Activated CD4-positive, alpha-beta memory T cell treated with anti-CD3 and anti-CD28 coated beads, Interleukin-2, amount 10 ng/mL, durations not matched to agents 7 days and 5 days (primary cell): ENCODE measurements at regions of chr14 and their contacts with region 1.

Region 1: DNA sequence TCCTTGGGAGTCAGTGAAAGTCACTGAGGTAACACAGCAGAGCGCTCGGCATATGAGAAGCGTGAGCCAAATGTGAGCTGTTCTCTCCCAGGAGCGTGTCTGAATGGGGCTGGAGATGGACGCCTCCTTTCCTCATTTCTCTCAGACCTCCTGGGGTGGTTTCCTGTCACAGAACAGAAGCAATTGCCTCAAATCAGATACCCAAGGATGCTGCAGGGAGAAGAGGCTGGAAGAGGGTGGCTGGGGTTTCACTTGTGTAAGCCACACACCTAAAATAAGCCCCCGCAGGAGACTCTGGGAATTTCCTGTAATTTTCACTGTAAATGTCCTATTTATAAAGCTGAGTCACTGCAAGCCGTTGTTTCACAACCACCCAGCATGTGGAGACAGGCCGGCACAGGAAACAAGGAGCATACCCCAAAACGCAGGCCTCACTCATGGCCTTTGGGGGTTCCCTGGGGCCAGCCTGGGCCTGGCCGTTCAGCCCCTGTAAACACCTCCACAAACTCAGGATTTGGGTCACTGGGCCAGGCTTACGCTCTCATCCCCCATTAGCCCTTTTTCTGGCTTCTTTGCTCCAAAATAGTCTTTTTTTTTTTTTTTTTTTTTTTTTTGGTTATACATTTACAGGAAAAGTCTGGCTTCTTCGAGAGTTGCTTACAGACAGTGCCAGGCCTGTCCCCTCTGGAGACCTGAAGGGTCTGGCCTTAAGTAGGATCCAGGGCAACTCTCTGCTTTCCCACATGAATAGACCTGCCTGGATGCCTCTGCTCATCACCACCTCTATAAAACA is 55.3 kb downstream of the VCPKMT start:
- DNase-seq: peak; percentile 59
- H3K4me3 Mint-ChIP-seq: peak overlapping the region; percentile 93
- H3K27ac Mint-ChIP-seq: peak overlapping the region; percentile 100
- H3K4me1 Mint-ChIP-seq: peaks cover 85% of the 10 kb centered on the region
- H3K27me3 Mint-ChIP-seq: no peaks in the 10 kb centered on the region

Region 2: DNA sequence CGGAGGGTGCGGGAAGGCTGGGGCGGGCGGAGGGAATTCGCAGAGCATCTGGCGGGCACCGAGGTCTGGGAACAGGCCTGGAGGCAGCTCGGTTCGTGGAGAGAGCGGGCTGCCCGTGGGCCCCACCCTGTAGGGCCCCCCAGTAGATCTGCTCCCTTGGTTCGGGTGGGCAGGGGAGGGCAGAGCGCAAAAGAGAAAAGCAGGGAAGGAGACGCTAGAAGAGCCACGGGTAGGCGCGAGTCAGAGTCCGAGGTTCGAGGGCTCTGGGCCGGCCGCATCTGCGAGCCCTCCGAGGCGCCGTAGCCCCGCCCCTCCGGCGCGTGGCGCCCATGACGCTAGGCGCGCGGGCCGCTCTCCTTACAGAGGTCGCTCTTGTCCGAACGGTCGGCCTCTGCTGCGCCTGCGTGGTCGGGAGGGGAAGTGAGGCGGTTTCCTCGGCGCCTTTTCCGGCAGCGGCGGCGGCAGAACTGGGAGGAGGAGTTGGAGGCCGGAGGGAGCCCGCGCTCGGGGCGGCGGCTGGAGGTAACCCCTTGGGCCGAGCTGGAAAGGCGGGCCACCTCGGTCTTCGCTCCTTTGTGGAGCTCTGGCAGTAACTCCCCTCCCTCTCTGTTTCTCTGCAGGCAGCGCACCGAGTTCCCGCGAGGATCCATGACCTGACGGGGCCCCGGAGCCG is 168.3 kb before region 1 on chr14 and contains the start of gene ARF6:
- CTCF ChIA-PET with region 1: interaction called, 6 read pairs
- POLR2A ChIA-PET with region 1: interaction called, 65 read pairs
- DNase-seq: peak; percentile 98
- H3K4me3 Mint-ChIP-seq: peak within 1 kb of the TSS; percentile 96
- H3K27ac Mint-ChIP-seq: peak within 1 kb of the TSS; percentile 100
- H3K4me1 Mint-ChIP-seq: peaks cover 20% of the 10 kb centered on the region
- H3K27me3 Mint-ChIP-seq: no peaks in the 10 kb centered on the region
- total RNA-seq, gene ARF6: 198 to 199 TPM

Region 3: DNA sequence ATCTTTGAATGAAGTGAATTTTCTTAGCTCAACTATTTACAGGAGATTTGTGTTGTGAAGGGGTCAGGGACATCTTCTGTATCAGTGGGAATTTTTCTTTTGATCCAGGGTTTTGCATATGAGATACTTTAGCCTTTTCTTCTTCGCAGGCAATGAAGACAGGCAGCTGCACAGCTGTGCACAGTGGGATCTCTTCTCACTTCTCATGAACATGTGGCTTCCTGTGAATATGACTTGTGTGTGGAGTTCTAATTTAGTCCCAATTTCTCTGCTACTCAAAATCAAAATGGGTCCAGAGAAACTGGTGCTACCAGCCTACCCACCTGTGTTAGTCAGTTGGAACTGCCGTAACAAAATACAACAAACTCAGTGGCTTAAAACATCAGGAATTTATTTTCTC is 130.3 kb before region 1 on chr14:
- CTCF ChIA-PET with region 1: no interaction called
- POLR2A ChIA-PET with region 1: no interaction called
- DNase-seq: no peak
- H3K4me3 Mint-ChIP-seq: no peak overlapping the region
- H3K27ac Mint-ChIP-seq: no peak overlapping the region
- H3K4me1 Mint-ChIP-seq: peaks cover 11% of the 10 kb centered on the region
- H3K27me3 Mint-ChIP-seq: no peaks in the 10 kb centered on the region

Region 4: GRCh38 chr14:49940808-49941421 is 120.2 kb before region 1 on chr14:
- CTCF ChIA-PET with region 1: interaction called, 6 read pairs
- POLR2A ChIA-PET with region 1: interaction called, 17 read pairs
- DNase-seq: peak; percentile 30
- H3K4me3 Mint-ChIP-seq: no peak overlapping the region
- H3K27ac Mint-ChIP-seq: peak overlapping the region; percentile 63
- H3K4me1 Mint-ChIP-seq: peaks cover 68% of the 10 kb centered on the region
- H3K27me3 Mint-ChIP-seq: no peaks in the 10 kb centered on the region

Region 5: DNA sequence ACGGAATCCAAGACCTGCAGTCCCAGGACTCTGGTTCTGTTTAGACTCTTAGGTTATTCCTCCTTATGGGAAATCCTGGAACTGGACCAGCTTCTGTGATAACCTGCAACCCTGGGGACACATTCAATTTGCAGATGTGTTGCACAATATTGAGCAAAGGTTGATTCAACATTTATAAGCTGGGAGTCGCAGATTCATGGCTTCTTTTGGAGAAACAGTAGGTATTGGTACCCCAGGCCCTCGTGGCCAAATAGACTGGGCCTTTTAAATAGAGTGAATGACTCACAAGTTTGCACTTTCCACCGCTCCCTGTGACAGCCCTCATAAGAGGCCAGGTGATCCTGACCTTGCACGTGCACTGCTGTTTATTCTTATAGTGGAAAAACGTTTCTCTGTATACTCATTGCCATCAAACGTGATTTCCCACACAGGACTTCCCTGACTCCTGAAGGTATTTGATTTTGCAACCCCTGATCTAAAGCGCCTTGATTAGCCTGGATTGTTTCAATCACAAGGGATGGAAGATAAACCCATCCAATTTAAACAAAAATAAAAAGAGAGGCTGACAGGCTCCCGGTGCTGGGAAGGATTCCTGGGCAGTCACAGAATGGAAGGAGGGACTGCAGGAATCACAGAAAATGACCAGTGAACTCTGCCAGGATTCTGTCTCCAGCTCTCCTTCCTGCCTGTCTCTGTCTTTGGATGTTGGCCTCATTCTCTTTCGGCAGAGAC is 42.7 kb before region 1 on chr14:
- CTCF ChIA-PET with region 1: interaction called, 7 read pairs
- POLR2A ChIA-PET with region 1: interaction called, 11 read pairs
- DNase-seq: no peak
- H3K4me3 Mint-ChIP-seq: no peak overlapping the region
- H3K27ac Mint-ChIP-seq: no peak overlapping the region
- H3K4me1 Mint-ChIP-seq: peaks cover 44% of the 10 kb centered on the region
- H3K27me3 Mint-ChIP-seq: no peaks in the 10 kb centered on the region

Region 6: DNA sequence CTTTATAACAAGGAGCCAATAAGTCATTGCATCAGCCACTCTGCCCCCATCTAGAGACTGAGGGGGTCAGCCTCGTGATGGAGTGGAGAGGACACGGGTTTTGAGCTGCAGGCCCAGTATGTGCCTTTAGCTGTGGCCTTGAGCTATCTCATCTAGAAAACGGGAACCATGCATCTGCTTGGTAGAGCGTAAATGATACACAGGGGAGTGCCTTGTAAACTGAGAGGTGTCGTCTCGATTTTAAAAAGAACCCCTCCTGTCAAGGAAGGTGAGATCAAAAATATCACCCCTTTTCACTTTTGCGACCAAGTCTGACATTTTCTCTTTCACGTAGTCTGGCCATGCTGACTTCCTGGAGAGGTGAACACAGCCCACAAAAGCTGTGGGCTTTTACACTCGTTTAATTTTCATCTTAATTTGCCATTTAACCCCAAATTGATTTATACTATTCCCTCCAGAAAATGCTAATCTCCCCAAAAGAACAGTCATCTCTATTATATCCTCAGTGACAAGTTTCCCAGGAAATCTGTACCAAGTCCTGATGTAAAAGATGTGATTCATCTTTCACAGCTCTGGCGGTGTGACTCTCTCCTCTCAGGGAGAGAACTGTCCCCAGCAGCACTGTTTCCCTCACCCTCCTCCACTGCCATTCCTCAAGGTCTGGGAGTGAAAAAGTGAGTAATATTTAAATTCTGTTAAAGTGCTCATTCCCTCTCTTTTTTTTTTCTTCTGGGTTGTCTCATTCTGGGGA is 24.7 kb after region 1 on chr14:
- CTCF ChIA-PET with region 1: interaction called, 11 read pairs
- POLR2A ChIA-PET with region 1: interaction called, 184 read pairs
- DNase-seq: no peak
- H3K4me3 Mint-ChIP-seq: peak overlapping the region; percentile 28
- H3K27ac Mint-ChIP-seq: peak overlapping the region; percentile 98
- H3K4me1 Mint-ChIP-seq: peaks cover 86% of the 10 kb centered on the region
- H3K27me3 Mint-ChIP-seq: peaks cover 4% of the 10 kb centered on the region

Region 7: DNA sequence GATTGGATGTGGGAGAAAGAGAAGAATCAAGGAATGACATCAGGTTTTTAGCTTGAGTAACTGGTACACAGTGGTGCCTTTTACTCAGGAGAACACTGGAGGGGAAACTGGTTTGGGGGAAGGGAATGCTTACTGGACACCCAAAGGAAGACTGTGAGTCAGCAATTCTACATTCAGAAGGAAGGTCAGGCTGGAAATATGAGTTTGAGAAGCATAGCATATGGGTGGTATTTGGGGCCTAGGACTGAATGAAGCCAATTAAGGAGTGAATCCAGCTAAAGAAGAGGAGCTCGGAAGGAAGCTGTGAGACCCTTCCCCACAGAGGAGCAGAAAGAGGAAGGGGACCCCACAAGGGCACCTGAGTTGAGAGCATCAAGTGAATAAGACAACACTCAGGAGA is 286.5 kb after region 1 on chr14:
- CTCF ChIA-PET with region 1: no interaction called
- POLR2A ChIA-PET with region 1: no interaction called
- DNase-seq: no peak
- H3K4me3 Mint-ChIP-seq: no peak overlapping the region
- H3K27ac Mint-ChIP-seq: no peak overlapping the region
- H3K4me1 Mint-ChIP-seq: peaks cover 13% of the 10 kb centered on the region
- H3K27me3 Mint-ChIP-seq: no peaks in the 10 kb centered on the region

Region 8: DNA sequence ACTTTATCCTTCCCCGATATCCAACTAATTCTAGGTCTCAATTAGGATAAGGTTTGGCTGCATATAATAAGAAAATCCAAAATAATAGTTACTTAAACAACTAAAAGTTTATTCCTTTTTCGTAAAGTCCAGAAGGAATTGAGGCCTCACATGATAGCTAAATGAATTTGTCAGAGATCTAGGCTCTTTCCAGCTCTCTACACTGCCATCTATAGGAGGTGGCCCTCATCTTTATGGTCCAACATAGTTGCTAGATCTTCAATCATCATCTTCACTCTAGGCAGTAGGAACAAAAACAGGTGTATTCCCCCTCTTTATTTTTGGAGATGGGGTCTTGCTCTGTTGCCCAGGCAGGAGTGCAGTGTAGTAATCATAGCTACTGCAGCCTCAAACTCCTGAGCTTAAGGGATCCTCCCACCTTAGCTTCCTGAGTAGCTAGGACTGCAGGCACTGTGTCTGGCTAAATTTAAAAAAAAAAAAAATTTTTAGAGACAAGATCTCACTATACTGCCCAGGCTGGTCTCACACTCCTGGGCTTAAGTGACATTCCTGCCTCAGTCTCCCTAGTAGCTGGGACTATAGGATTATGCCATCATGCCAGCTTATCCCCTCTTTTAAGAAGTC is 653.5 kb after region 1 on chr14:
- CTCF ChIA-PET with region 1: no interaction called
- POLR2A ChIA-PET with region 1: no interaction called
- DNase-seq: no peak
- H3K4me3 Mint-ChIP-seq: no peak overlapping the region
- H3K27ac Mint-ChIP-seq: no peak overlapping the region
- H3K4me1 Mint-ChIP-seq: no peaks in the 10 kb centered on the region
- H3K27me3 Mint-ChIP-seq: no peaks in the 10 kb centered on the region